Left lung (tissue), 14 donors: ENCODE measurements at regions of chr2 and their contacts with region 1.

Region 1: GRCh38 chr2:165239856-165240515 is 772 bp downstream of the SCN2A start:
- DNase-seq: no peak
- ATAC-seq: no peak
- H3K4me3 ChIP-seq: no peak overlapping the region
- H3K27ac ChIP-seq: no peak overlapping the region
- H3K4me1 ChIP-seq: no peaks in the 10 kb centered on the region
- H3K27me3 ChIP-seq: no peaks in the 10 kb centered on the region
- CTCF ChIP-seq: no peak

Region 2: GRCh38 chr2:165293440-165294353 is 53.7 kb after region 1 on chr2:
- intact Hi-C with region 1: loop called in 1 of 2 experiments (anchors 10 kb)
- DNase-seq: peak in 2 of 4 donors; percentile 72 to 89
- ATAC-seq: peak; percentile 100
- H3K4me3 ChIP-seq: no peak overlapping the region
- H3K27ac ChIP-seq: no peak overlapping the region
- H3K4me1 ChIP-seq: no peaks in the 10 kb centered on the region
- H3K27me3 ChIP-seq: no peaks in the 10 kb centered on the region
- CTCF ChIP-seq: peak; percentile 64 to 71